Endothelial cell of umbilical vein (primary cell): ENCODE measurements at regions of chr2 and their contacts with region 1.

Region 1: DNA sequence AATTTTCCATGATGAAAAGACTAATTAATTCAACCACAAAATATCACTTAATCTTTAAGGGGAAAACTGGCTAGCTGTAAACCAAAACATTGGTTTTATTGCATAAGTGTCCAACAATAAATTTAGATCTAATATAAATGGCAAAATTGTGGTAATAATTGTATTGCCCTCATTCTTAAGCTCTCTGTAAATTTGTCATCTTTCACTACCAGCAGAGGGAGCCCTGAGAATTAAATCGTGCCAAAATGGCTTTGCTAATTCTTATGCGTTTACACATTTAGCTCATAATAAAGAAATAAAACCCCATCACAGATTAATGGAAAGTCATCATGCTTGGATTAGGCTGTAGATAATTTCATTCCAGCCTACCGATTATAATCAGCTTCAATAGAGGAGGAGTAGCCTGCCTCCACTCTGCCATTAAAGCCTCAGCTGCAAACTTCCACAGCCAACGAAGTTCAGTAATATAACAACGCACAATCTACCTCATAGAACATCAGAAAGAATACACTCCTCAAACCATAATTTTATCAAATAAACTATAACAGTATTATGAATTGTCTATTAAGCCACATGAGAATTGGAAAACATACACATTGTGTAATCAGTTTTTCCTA is 70.0 kb upstream of the ATP5MC3 start:
- DNase-seq: peak; percentile 48
- H3K4me3 ChIP-seq: no peak overlapping the region
- H3K27ac ChIP-seq: no peak overlapping the region
- H3K4me1 ChIP-seq: no peaks in the 10 kb centered on the region
- H3K27me3 ChIP-seq: peaks cover 12 to 16% of the 10 kb centered on the region in 2 experiments
- CTCF ChIP-seq: peak; percentile 46 to 57
- POLR2A ChIP-seq: no peak

Region 2: GRCh38 chr2:174878537-174879147 is 372.9 kb before region 1 on chr2:
- CTCF ChIA-PET with region 1: no interaction called
- POLR2A ChIA-PET with region 1: no interaction called
- dilution Hi-C with region 1: no loop called
- intact Hi-C with region 1: no loop called
- DNase-seq: peak; percentile 82
- H3K4me3 ChIP-seq: peak overlapping the region; percentile 15 to 91 (median 68)
- H3K27ac ChIP-seq: no peak overlapping the region
- H3K4me1 ChIP-seq: peaks cover 7% of the 10 kb centered on the region
- H3K27me3 ChIP-seq: no peaks in the 10 kb centered on the region
- CTCF ChIP-seq: no peak
- POLR2A ChIP-seq: no peak

Region 3: GRCh38 chr2:175030380-175031271 is 220.9 kb before region 1 on chr2:
- CTCF ChIA-PET with region 1: interaction called, 10 read pairs
- POLR2A ChIA-PET with region 1: no interaction called
- dilution Hi-C with region 1: no loop called
- intact Hi-C with region 1: no loop called
- DNase-seq: peak; percentile 52
- H3K4me3 ChIP-seq: no peak overlapping the region
- H3K27ac ChIP-seq: no peak overlapping the region
- H3K4me1 ChIP-seq: no peaks in the 10 kb centered on the region
- H3K27me3 ChIP-seq: no peaks in the 10 kb centered on the region
- CTCF ChIP-seq: peak; percentile 24 to 60
- POLR2A ChIP-seq: no peak

Region 4: GRCh38 chr2:175218551-175218950 is 33.0 kb before region 1 on chr2:
- CTCF ChIA-PET with region 1: interaction called, 14 read pairs
- POLR2A ChIA-PET with region 1: no interaction called
- dilution Hi-C with region 1: no loop called
- intact Hi-C with region 1: no loop called
- DNase-seq: no peak
- H3K4me3 ChIP-seq: no peak overlapping the region
- H3K27ac ChIP-seq: no peak overlapping the region
- H3K4me1 ChIP-seq: no peaks in the 10 kb centered on the region
- H3K27me3 ChIP-seq: peaks cover 0 to 4% of the 10 kb centered on the region in 2 experiments
- CTCF ChIP-seq: no peak
- POLR2A ChIP-seq: no peak

Region 5: DNA sequence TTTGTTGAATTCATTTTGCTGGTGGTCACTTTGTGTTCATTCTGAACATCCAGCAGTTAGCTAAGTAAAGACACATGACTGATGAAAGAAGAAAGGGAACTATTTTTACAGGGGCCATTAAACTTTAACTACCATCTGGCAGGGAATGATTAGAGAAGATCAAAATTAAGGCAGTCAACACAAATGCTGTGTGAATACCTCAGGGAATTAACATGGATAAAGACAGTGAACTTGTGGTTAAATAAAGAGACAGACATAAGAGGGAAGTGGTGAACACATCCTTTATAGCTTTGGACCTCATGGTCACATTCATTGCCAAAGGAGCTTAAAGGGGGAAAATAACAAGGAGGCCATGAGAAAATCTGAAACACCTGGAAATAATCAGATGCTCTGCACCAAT is 17.4 kb before region 1 on chr2:
- CTCF ChIA-PET with region 1: interaction called, 13 read pairs
- POLR2A ChIA-PET with region 1: no interaction called
- dilution Hi-C with region 1: no loop called
- intact Hi-C with region 1: no loop called
- DNase-seq: no peak
- H3K4me3 ChIP-seq: no peak overlapping the region
- H3K27ac ChIP-seq: no peak overlapping the region
- H3K4me1 ChIP-seq: no peaks in the 10 kb centered on the region
- H3K27me3 ChIP-seq: no peaks in the 10 kb centered on the region
- CTCF ChIP-seq: no peak
- POLR2A ChIP-seq: no peak

Region 6: GRCh38 chr2:175282290-175282689 is 30.8 kb after region 1 on chr2:
- CTCF ChIA-PET with region 1: interaction called, 49 read pairs
- POLR2A ChIA-PET with region 1: no interaction called
- dilution Hi-C with region 1: no loop called
- intact Hi-C with region 1: loop called (anchors 1 kb)
- DNase-seq: peak; percentile 44
- H3K4me3 ChIP-seq: no peak overlapping the region
- H3K27ac ChIP-seq: no peak overlapping the region
- H3K4me1 ChIP-seq: no peaks in the 10 kb centered on the region
- H3K27me3 ChIP-seq: peaks cover 17 to 18% of the 10 kb centered on the region in 2 experiments
- CTCF ChIP-seq: peak; percentile 20 to 26
- POLR2A ChIP-seq: no peak

Region 7: GRCh38 chr2:175326801-175327200 is 75.3 kb after region 1 on chr2:
- CTCF ChIA-PET with region 1: interaction called, 22 read pairs
- POLR2A ChIA-PET with region 1: no interaction called
- dilution Hi-C with region 1: no loop called
- intact Hi-C with region 1: loop called (anchors 5 kb)
- DNase-seq: no peak
- H3K4me3 ChIP-seq: no peak overlapping the region
- H3K27ac ChIP-seq: no peak overlapping the region
- H3K4me1 ChIP-seq: no peaks in the 10 kb centered on the region
- H3K27me3 ChIP-seq: no peaks in the 10 kb centered on the region
- CTCF ChIP-seq: no peak
- POLR2A ChIP-seq: no peak

Region 8: DNA sequence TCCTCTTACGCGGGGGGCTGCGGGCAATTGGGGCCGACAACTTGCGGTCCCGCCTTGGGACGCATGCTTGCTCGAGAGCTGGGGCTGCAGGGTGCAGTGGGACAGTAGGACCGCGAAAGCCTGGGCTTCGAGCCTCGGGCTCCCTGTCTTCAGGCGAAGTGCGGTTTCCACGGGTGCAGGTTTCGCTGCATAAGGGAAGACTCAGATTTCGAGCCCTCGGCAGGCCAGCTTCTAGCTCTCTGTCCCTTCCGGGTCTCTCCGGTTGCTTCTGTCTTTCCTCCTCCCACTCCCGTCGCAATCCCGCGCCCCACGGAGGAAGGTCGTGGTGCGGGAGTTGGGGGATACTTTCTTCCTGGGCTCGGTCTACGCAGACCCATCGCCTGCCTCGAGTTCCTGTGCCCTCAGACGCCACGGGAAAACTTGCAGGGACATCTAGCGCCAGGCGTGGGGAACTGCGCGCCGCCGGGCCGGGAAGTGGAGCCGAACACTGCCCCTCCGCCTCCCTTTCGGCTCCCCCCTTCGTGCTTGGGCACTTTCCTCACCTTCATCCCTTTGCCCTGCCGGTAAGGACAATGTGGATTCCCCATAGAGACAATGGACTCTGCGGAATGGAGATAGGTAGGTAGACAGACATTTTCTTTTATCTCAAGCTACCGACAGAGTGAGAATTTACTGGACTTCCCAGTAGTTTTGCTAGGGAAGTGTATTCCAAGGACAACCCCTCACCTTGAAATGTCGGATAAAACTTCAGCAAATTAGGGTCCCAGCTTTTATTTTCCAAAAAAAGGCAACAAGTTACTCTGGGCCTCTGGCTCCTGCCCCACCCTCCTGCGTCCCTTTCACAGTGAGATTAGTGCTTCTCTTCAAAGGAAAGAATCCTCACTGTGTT is 836.8 kb after region 1 on chr2:
- CTCF ChIA-PET with region 1: interaction called, 21 read pairs
- POLR2A ChIA-PET with region 1: no interaction called
- dilution Hi-C with region 1: no loop called
- intact Hi-C with region 1: loop called (anchors 2 kb)
- DNase-seq: peak; percentile 51
- H3K4me3 ChIP-seq: no peak overlapping the region
- H3K27ac ChIP-seq: no peak overlapping the region
- H3K4me1 ChIP-seq: no peaks in the 10 kb centered on the region
- H3K27me3 ChIP-seq: peaks cover 87 to 98% of the 10 kb centered on the region in 2 experiments
- CTCF ChIP-seq: peak; percentile 68 to 87
- POLR2A ChIP-seq: no peak